ENCODE measurements at regions of chr11 and their contacts with region 1.

Region 1: GRCh38 chr11:33670250-33671011 is 30.2 kb downstream of the C11orf91 start:
- DNase-seq: no peak
- ATAC-seq: no peak
- H3K4me3 ChIP-seq: no peak overlapping the region
- H3K27ac ChIP-seq: no peak overlapping the region
- H3K4me1 ChIP-seq: no peaks in the 10 kb centered on the region
- H3K27me3 ChIP-seq: peaks cover 0 to 4% (median 0%) of the 10 kb centered on the region in 7 donors
- CTCF ChIP-seq: no peak

Region 2: DNA sequence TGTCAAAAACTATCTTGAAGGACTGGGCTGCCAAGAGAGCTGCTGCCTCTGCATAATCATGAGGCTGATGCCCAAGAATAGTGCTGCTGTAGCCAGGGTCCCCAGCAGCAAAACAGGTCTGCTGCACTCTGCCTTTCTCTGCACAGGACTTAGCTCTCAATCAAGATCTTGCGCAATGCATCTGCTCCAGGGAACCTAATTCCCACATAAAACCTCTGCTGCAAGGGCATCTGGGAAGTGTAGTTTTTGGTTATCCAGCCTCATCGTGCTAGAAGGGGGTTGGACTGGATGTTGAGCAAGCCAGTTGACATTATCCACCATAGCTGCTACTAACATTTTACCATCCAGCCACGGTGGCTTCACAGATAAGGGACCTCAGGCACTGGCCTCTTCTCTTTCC is 162.5 kb before region 1 on chr11:
- intact Hi-C with region 1: no loop called
- DNase-seq: no peak
- ATAC-seq: peak in 1 of 8 donors; percentile 25
- H3K4me3 ChIP-seq: no peak overlapping the region
- H3K27ac ChIP-seq: no peak overlapping the region
- H3K4me1 ChIP-seq: no peaks in the 10 kb centered on the region
- H3K27me3 ChIP-seq: peaks cover 0 to 11% (median 0%) of the 10 kb centered on the region in 7 donors
- CTCF ChIP-seq: no peak

Region 3: DNA sequence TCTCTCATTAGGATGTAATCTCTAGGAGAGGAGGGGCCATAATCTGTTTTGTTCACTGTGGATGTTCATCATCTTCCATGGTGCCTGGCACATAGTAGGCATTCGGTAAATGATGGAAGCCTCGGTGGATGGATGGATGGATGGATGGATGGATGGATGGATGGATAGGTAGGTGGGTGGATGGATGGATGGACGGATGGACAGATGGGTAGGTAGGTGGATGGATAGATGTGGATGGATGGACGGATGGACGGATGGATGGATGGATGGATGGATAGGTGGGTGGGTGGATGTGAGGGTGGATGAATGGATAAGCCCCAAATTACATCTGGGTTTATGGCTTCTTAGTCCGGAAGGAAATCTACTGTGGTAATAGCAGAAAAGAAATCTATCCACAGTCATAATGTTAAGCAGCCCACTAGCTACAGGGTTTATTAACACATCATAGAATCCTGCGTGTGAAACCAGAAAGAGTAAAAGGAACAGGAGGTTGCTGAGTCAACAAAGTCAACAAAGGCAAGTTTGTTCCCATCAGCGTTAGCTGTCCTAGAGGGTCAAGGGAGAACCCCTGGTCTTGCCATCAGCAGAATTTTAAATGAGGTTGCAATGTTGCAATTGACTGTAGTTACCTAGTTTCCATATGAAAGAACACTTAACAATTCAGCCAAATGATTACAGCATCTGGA is 52.6 kb before region 1 on chr11:
- intact Hi-C with region 1: loop called in 1 of 10 experiments (anchors 10 kb)
- DNase-seq: no peak
- ATAC-seq: no peak
- H3K4me3 ChIP-seq: no peak overlapping the region
- H3K27ac ChIP-seq: no peak overlapping the region
- H3K4me1 ChIP-seq: peaks cover 0 to 9% (median 0%) of the 10 kb centered on the region in 9 donors
- H3K27me3 ChIP-seq: peaks cover 0 to 6% (median 0%) of the 10 kb centered on the region in 7 donors
- CTCF ChIP-seq: no peak

Region 4: DNA sequence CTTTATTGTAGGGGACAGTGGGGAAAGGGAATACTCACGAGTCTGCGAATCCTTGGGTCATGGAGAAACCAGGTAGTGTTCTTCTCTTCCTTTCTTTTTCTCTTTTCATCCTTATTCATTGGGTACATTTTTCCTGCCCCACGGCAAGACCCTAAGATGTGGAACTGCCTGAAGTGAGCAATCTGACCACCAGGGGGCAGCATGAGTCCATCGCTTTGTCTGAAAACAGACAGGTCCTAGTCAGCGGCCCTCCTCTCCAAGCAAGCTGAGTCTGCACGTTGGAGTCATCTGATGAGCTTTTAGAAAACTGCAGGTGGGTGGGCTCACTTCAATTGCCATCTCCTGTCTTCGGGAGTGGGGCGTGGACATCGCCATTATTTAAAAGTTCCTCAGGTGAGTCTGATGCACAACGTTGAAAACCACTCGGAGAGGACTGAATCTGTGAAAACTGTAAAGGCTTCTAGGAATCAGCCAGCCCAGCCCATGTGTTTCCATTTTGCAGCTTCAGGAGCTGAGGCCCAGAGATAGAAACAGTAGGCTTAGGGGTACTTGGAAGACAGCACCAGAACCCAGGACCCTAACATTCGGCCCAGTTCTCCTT is 137.9 kb after region 1 on chr11:
- intact Hi-C with region 1: no loop called
- DNase-seq: peak; percentile 84 to 87
- ATAC-seq: peak; percentile 75 to 96 (median 90)
- H3K4me3 ChIP-seq: no peak overlapping the region
- H3K27ac ChIP-seq: no peak overlapping the region
- H3K4me1 ChIP-seq: peaks cover 0 to 7% (median 0%) of the 10 kb centered on the region in 9 donors
- H3K27me3 ChIP-seq: peaks cover 0 to 10% (median 3%) of the 10 kb centered on the region in 7 donors
- CTCF ChIP-seq: peak; percentile 86 to 94 (median 91)